ENCODE measurements at regions of chr17 and their contacts with region 1.

Region 1: GRCh38 chr17:7745748-7746470 is 28.4 kb downstream of the DNAH2 start:
- DNase-seq: peak; percentile 82

Region 2: DNA sequence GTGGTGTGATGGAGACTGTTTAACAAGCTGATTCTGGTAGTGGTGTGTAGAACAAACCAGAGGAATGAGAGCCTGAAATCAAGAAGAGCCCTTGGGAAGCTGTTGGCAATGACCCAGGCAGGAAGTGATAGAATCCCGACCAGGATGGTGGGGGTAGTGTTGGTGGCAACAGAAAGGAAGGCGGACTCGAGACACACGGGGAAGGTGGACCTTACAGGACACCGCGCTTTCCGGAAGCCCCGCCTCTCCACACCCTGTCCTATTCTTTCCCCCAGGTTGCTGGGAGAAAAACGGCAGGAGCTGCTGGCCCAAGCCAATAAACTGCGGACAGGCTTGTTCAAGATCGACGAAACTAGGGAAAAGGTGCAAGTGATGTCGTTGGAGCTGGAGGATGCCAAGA is 58.1 kb after region 1 on chr17:
- intact Hi-C with region 1: no loop called
- DNase-seq: peak; percentile 50

Region 3: DNA sequence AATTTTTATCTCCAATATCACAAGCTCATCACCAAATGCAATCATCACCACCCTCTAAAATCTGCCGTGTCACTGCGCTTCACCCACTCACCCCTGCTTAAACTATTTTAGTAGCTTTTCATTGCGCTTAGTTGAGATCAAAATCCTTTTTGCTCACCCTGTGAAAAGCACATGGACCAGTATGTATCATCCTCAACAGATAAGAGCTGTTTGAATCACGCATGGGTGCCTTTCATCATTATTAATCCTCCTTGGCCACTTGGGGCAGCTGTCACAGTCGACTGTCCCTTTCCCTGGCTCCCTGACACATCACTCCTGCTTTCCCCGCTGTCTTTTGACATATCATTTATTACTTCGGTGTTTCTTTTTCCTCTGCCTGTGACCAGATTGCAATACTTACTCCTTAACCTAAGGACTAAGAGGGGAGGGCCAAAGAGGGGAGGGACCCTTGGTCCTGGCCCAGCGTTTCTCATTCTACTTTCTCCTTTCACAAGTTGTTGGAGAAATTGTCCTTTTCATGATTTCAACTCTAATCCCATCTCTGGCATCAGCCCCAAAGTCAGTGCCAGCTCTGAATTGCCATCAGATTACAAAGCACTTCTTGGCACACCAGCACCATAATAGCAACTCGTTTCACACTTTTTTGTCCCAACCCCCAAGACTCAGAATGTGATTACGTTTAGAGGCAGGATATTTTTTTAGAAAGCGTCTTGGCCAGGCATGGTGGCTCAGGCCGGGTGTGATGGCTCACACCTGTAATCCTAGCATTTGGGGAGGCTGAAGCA is 79.5 kb after region 1 on chr17:
- intact Hi-C with region 1: loop called in 1 of 2 experiments (anchors 10 kb)
- DNase-seq: no peak

Region 4: DNA sequence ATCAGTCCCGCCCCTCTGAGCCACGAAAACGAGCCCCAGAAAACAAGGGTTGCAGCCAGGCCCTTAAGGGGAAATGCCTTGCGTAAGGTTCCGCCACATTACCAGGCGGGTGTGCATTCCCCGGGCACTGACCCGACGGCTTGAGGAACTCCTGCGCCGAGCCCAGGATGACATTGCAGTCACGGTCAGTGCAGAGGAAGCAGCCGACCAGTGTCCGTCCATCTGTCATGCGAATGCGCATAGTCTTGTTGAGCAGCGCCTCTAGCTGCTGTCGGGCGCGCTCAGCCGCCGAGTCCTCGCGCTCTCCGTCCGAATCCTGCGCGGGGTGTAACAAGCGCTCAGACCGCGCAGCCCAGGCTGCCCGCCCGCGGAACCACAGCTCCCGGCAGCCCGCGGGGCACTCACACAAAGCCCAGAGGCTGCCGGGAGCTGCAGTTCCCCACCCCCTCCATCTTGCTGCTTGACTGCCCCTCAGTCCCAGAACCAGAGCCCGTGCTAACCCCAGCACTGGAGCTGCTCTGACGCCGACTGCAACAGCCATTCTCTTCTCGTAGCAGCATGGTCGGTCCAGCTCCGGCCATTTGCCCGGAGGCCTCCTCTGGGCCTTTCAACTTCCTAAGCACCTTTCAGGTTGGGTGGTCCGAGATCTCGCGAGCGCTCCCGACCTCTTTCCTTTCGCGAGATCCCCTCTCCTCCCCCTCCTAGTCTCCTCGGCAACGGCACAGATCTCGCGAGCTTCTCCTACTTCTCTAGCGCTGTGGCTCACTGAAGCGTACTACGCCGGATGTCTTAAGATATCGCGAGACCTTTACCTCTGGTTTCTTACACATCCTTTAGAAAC is 111.2 kb after region 1 on chr17 and contains the start of gene NAA38:
- intact Hi-C with region 1: loop called in 1 of 2 experiments (anchors 10 kb)
- DNase-seq: peak; percentile 99
- total RNA-seq, gene NAA38: 65.2 to 79.7 TPM

Measured in posterior vena cava (tissue), 2 donors.